Naive thymus-derived CD4-positive, alpha-beta T cell (primary cell): ENCODE measurements at regions of chr7 and their contacts with region 1.

Region 1: GRCh38 chr7:4883374-4884144 is at the start of gene RADIL:
- DNase-seq: peak; percentile 65 to 92 (median 86)
- ATAC-seq: peak; percentile 98
- H3K4me3 ChIP-seq: no peak within 1 kb of the TSS
- H3K4me3 Mint-ChIP-seq: peak within 1 kb of the TSS; percentile 48 to 79 (median 76)
- H3K27ac ChIP-seq: no peak within 1 kb of the TSS
- H3K27ac Mint-ChIP-seq: peak within 1 kb of the TSS in 2 of 9 donors; percentile 19 to 25
- H3K4me1 ChIP-seq: no peaks in the 10 kb centered on the region
- H3K4me1 Mint-ChIP-seq: peaks cover 7 to 17% (median 13%) of the 10 kb centered on the region in 7 donors
- H3K27me3 ChIP-seq: peaks cover 0 to 8% of the 10 kb centered on the region in 2 donors
- H3K27me3 Mint-ChIP-seq: peaks cover 23 to 39% (median 32%) of the 10 kb centered on the region in 5 donors
- total RNA-seq, gene RADIL: 0.08 to 0.12 TPM in 2 of 5 experiments, not detected in the others

Region 2: GRCh38 chr7:4641667-4642467 is 241.7 kb before region 1 on chr7:
- CTCF ChIA-PET with region 1: no interaction called
- POLR2A ChIA-PET with region 1: no interaction called
- intact Hi-C with region 1: loop called in 1 of 2 experiments (anchors 5 kb)
- DNase-seq: peak; percentile 94 to 99 (median 98)
- ATAC-seq: peak; percentile 92
- H3K4me3 ChIP-seq: peak overlapping the region; percentile 85
- H3K4me3 Mint-ChIP-seq: peak overlapping the region; percentile 73 to 94 (median 90)
- H3K27ac ChIP-seq: peak overlapping the region; percentile 87
- H3K27ac Mint-ChIP-seq: peak overlapping the region; percentile 89 to 99 (median 97)
- H3K4me1 ChIP-seq: peaks cover 7 to 10% of the 10 kb centered on the region in 2 donors
- H3K4me1 Mint-ChIP-seq: peaks cover 5 to 26% (median 13%) of the 10 kb centered on the region in 7 donors
- H3K27me3 ChIP-seq: no peaks in the 10 kb centered on the region
- H3K27me3 Mint-ChIP-seq: no peaks in the 10 kb centered on the region

Region 3: GRCh38 chr7:4791738-4792536 is 91.6 kb before region 1 on chr7:
- CTCF ChIA-PET with region 1: no interaction called
- POLR2A ChIA-PET with region 1: no interaction called
- intact Hi-C with region 1: loop called (anchors 5 kb)
- DNase-seq: peak; percentile 68 to 87 (median 79)
- ATAC-seq: peak; percentile 96
- H3K4me3 ChIP-seq: peak overlapping the region; percentile 37
- H3K4me3 Mint-ChIP-seq: peak overlapping the region in 8 of 10 donors; percentile 5 to 66 (median 42)
- H3K27ac ChIP-seq: peak overlapping the region; percentile 44
- H3K27ac Mint-ChIP-seq: peak overlapping the region in 2 of 9 donors; percentile 49 to 54
- H3K4me1 ChIP-seq: no peaks in the 10 kb centered on the region
- H3K4me1 Mint-ChIP-seq: peaks cover 0 to 8% (median 6%) of the 10 kb centered on the region in 7 donors
- H3K27me3 ChIP-seq: no peaks in the 10 kb centered on the region
- H3K27me3 Mint-ChIP-seq: no peaks in the 10 kb centered on the region

Region 4: DNA sequence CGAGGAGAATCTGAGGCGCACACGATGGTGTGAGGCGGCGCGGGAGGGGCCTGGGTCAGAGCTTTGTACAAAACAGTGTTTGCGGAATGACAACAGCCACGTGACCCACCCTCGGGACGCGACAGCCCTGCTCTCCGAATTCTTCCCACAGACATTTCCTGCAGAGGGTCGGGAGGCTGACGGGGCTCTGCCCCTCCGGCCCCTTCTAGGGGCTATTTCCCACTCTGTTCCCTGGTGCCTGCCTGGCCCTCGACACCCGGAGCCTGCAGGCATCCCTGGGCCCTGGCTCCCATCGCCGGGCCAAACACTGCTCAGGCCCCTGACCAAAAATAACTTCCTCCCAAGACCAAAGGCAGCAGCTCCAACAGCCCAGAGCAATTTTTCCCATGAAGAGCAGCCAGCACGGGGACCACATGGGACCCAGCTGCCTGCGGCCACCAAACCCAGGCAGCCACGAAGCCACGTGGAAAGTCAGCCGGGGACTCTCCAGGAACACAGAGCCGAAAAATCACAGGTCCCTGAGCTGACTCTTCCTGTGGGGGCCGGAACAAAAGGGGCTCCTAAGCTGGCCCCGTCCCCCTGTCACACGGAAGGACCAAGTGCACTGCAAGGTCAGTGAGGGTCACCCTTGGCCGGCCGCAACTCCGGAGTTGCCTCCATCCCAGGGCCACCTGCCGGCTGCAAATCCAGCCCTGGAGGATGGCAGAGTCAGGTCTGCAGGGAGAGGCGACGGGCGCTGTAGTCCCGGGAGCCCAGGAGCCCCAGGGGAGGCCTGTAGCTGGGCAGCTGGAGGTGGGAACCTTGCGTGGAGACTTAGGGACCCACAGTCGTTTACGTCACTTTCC is 63.8 kb before region 1 on chr7:
- CTCF ChIA-PET with region 1: no interaction called
- POLR2A ChIA-PET with region 1: no interaction called
- intact Hi-C with region 1: loop called in 1 of 2 experiments (anchors 10 kb)
- DNase-seq: no peak
- ATAC-seq: no peak
- H3K4me3 ChIP-seq: no peak overlapping the region
- H3K4me3 Mint-ChIP-seq: no peak overlapping the region
- H3K27ac ChIP-seq: no peak overlapping the region
- H3K27ac Mint-ChIP-seq: no peak overlapping the region
- H3K4me1 ChIP-seq: no peaks in the 10 kb centered on the region
- H3K4me1 Mint-ChIP-seq: peaks cover 0 to under 1% (median 0%) of the 10 kb centered on the region in 7 donors
- H3K27me3 ChIP-seq: no peaks in the 10 kb centered on the region
- H3K27me3 Mint-ChIP-seq: peaks cover 0 to 12% (median 5%) of the 10 kb centered on the region in 5 donors